Left cardiac atrium (tissue), 4 donors: ENCODE measurements at regions of chr18 and their contacts with region 1.

Region 1: DNA sequence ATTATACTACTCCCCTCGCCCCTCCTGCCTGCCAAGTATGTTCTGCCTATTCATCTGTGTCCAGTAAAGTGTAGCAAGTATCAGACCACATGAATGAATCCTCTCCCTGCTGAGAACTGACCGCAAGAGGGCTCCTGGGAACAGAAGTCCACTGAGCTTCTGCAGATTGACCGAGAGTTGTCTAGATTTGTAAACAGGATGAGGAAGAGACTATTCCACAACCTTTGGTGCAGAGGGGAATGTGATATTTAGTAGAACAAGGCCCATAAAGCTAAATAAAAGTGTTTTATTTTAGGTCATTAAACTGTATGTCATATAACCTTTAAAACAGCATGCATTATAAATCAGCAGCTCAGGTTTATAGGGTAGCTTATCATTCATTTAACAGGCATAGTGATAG is 377.0 kb downstream of the DCC start:
- DNase-seq: peak; percentile 16
- ATAC-seq: no peak

Region 2: GRCh38 chr18:52766002-52766545 is 49.1 kb after region 1 on chr18:
- intact Hi-C with region 1: loop called in 1 of 2 experiments (anchors 10 kb)
- DNase-seq: no peak
- ATAC-seq: no peak